AG04450 (cell line): ENCODE measurements at regions of chr6 and their contacts with region 1.

Region 1: DNA sequence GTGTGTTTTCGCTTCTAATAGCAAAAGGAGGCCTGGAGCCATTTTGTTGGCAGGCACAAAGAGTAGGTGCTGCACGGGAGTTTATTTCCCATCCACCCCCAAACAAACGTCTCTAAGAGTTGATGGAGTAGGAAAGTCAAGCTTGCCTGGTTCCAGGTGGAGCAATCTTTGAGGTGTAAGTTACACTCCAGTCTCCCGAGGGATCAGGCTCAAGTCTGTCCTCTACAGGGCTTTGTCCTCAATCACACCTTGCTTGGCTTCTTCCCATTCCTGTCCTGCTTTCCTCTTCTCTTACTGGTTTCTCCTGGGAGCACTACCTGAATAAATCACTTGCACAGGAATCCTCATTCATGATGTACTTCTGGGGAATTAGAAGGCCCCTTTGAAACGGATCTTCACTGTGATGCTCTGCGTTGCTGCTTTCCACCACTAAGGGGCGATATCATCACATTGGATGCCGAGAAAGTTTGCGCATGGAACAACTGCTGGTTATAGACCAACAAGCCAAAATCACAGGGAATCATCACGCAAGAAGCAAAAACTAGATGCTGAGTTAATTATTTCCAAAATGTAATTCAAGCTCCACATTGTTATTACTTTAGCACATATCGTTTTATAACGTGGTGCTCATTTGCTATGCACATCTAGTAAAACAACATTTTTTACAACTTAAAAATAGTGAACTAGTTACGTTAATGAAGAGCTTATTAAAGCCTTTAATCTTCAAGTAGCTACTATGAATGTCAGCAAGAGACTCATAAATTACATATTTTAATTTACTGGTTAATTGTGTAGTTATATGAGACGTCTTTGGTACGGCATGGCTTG is 156.8 kb downstream of the DNAH8 start:
- DNase-seq: peak; percentile 1
- H3K4me3 ChIP-seq: no peak overlapping the region
- H3K27ac ChIP-seq: no peak overlapping the region
- H3K27me3 ChIP-seq: no peaks in the 10 kb centered on the region
- CTCF ChIP-seq: peak; percentile 96

Region 2: DNA sequence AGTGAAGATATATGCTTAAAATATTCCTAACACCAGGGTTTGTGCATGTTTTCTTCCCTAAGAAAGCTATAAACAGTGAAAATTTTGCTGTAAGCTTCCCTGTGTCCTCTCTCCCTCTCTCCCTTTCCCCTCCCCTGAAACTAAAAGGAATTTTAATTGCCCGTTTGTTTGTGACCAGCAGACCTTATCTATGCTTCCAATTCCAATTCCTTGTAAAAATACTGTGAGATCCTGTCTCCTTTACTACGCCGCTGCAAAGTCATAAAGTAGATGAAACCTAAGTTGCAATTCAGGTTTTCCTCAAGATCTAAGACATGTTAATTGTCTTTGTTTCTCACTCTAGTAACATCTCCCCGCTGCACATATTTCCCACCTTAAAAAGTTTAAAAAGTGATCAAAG is 74.6 kb before region 1 on chr6:
- CTCF ChIA-PET with region 1: no interaction called
- POLR2A ChIA-PET with region 1: no interaction called
- DNase-seq: no peak
- H3K4me3 ChIP-seq: no peak overlapping the region
- H3K27ac ChIP-seq: no peak overlapping the region
- H3K27me3 ChIP-seq: no peaks in the 10 kb centered on the region
- CTCF ChIP-seq: no peak

Region 3: DNA sequence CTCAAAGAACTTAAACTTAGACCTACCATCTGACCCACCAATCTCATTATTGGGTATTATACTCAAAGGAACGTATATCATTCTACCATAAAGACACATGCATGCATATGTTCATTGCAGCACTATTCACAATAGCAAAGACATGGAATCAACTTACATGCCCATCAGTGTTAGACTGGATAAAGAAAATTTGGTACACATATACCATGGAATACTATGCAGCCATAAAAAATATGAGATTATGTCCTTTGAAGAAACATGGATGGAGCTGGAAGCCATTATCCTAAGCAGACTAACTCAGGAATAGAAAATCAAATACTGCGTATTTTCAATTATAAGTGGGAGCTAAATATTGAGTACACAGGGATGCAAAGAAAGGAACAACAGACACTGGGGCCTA is 10.2 kb after region 1 on chr6:
- CTCF ChIA-PET with region 1: interaction called, 12 read pairs
- POLR2A ChIA-PET with region 1: no interaction called
- DNase-seq: no peak
- H3K4me3 ChIP-seq: no peak overlapping the region
- H3K27ac ChIP-seq: no peak overlapping the region
- H3K27me3 ChIP-seq: no peaks in the 10 kb centered on the region
- CTCF ChIP-seq: no peak

Region 4: GRCh38 chr6:38897507-38897906 is 25.6 kb after region 1 on chr6:
- CTCF ChIA-PET with region 1: interaction called, 11 read pairs
- POLR2A ChIA-PET with region 1: no interaction called
- DNase-seq: no peak
- H3K4me3 ChIP-seq: no peak overlapping the region
- H3K27ac ChIP-seq: no peak overlapping the region
- H3K27me3 ChIP-seq: no peaks in the 10 kb centered on the region
- CTCF ChIP-seq: no peak

Region 5: GRCh38 chr6:39302669-39303424 is 430.9 kb after region 1 on chr6:
- CTCF ChIA-PET with region 1: interaction called, 47 read pairs
- POLR2A ChIA-PET with region 1: no interaction called
- DNase-seq: peak; percentile 2
- H3K4me3 ChIP-seq: no peak overlapping the region
- H3K27ac ChIP-seq: no peak overlapping the region
- H3K27me3 ChIP-seq: no peaks in the 10 kb centered on the region
- CTCF ChIP-seq: peak; percentile 81